ENCODE measurements at regions of chr11 and their contacts with region 1.

Region 1: DNA sequence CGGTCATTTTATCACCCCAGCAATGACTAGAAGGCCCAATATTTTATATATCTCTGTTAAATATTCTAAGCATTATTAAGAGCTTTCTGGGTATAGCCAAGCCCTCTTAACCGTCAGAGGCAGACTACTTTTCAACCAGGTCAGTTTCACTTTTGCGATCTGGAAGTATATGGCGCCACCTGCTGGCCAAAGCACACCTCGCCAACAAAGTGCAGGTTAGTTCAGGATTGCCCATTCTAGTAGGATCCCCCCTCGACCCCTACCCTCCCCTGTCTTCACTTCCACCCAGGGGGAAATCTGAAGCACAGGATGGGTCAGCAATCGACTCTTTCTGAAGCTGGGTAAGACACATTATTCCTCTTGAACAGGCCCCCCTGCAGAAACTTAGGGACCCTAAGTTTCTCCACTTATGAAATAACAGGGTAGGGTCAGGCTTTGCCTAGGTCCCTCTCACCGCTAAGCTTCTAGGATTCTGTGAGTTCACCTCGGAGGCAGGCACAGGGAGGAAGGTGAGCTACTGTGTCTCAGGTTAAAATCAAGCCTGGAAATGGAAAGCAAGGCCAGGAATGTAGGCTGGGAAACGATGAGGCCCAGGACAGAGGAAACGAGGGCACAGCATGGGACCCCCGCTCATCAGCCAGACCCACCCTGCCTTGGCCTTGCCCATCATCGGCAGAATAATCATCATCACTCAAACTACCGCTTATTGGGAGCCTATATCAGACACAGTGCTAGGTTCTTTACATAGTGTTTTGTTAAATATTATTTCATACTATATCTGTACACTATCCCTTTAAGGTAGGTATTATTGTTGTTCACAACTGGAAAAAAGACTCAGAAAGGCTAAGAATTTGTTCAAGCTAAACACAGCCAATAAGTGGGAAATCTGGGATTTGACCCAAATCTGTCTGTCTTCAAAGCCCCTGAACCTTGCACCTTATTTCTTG is 35.6 kb downstream of the KCNJ1 start:
- DNase-seq: peak; percentile 91
- ATAC-seq: peak; percentile 85
- H3K4me3 Mint-ChIP-seq: peak overlapping the region; percentile 58
- H3K27ac Mint-ChIP-seq: peak overlapping the region; percentile 66
- H3K4me1 Mint-ChIP-seq: peaks cover 30% of the 10 kb centered on the region
- H3K27me3 Mint-ChIP-seq: peaks cover 2% of the 10 kb centered on the region

Region 2: DNA sequence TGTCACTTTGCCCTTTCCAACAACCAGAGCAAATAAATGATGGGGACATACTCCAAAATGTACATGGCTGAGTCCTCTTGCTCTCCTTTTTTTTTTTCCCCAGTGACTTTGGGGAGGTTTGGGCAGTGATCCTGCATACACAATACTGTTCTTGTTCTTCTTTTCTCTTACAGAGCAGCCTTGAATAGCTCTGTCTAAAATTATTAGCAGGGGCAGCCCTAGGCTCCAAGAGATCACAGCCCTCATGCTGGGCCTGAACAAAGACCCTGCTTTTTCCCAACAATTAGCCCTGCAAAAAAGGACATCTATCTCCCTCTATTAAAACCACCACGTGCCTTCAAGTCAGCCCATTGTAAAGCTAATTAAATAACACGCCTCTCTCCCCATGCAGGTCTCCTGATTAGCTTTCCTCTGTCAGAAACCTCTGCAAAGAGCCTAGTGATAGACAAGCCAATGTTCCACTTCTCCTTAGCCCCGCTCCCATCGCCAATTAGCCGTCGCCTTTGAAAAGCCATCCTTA is 298.8 kb before region 1 on chr11:
- CTCF ChIA-PET with region 1: no interaction called
- POLR2A ChIA-PET with region 1: no interaction called
- DNase-seq: no peak
- ATAC-seq: no peak
- H3K4me3 Mint-ChIP-seq: no peak overlapping the region
- H3K27ac Mint-ChIP-seq: no peak overlapping the region
- H3K4me1 Mint-ChIP-seq: peaks cover 20% of the 10 kb centered on the region
- H3K27me3 Mint-ChIP-seq: peaks cover 2% of the 10 kb centered on the region

Region 3: DNA sequence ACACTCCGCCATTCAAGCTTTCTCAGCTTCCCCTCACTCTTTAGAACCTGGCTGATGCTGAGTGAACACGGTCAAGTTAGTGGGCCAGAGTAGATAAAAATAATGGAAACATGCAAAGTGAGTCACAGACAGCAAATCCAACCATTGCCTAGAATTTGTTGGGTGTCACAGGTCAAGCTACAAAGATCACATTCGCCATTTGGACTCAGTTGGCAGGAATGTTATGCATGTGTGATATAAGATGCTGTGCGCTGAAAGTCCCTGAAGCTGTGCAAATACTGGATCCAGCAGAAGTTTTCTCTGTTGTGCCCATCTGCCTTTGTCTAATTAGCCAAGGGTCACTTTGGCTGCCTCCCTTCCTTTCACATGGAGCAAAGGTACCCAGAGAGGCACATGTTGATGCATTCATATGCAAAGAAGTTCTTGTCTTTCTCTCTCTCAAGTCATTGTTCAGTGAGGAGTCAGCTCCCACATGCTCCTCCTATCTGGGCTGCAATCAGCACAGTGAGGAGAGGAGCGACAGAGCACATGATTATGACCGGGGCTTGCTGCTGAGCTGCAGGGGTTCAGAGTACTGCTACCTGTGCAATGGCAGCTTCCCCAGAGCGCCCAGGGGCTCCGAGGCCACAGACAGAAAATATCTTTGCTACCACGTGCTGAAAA is 97.9 kb before region 1 on chr11:
- CTCF ChIA-PET with region 1: interaction called, 10 read pairs
- POLR2A ChIA-PET with region 1: no interaction called
- DNase-seq: peak; percentile 51
- ATAC-seq: peak; percentile 53
- H3K4me3 Mint-ChIP-seq: peak overlapping the region; percentile 61
- H3K27ac Mint-ChIP-seq: peak overlapping the region; percentile 78
- H3K4me1 Mint-ChIP-seq: peaks cover 98% of the 10 kb centered on the region
- H3K27me3 Mint-ChIP-seq: no peaks in the 10 kb centered on the region

Region 4: DNA sequence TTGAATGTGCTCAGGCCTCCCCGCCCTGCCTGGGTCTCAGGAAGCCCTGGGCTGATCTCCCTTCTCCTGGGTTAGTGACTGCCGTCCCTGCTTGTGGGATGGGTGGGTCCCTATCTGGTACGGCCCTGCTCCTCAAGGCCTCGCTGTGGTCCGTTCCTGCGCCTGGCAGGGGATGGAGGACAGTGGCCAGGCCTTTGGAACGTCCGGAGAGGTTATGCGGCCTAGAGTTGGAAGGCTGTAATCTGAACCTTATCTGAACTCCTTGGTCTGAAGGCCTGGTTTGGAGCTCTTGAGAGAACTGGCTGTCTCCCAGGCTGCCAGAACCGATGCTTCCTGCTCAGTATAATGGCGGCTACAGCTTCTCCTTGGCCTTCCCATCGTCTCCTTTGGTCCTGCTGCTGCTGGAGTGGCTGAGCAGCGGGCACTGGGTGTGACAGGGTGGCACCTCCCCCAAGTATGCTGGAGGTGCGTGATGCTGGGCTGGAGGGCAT is 64.8 kb before region 1 on chr11:
- CTCF ChIA-PET with region 1: interaction called, 13 read pairs
- POLR2A ChIA-PET with region 1: no interaction called
- DNase-seq: no peak
- ATAC-seq: no peak
- H3K4me3 Mint-ChIP-seq: no peak overlapping the region
- H3K27ac Mint-ChIP-seq: no peak overlapping the region
- H3K4me1 Mint-ChIP-seq: peaks cover 22% of the 10 kb centered on the region
- H3K27me3 Mint-ChIP-seq: no peaks in the 10 kb centered on the region

Region 5: DNA sequence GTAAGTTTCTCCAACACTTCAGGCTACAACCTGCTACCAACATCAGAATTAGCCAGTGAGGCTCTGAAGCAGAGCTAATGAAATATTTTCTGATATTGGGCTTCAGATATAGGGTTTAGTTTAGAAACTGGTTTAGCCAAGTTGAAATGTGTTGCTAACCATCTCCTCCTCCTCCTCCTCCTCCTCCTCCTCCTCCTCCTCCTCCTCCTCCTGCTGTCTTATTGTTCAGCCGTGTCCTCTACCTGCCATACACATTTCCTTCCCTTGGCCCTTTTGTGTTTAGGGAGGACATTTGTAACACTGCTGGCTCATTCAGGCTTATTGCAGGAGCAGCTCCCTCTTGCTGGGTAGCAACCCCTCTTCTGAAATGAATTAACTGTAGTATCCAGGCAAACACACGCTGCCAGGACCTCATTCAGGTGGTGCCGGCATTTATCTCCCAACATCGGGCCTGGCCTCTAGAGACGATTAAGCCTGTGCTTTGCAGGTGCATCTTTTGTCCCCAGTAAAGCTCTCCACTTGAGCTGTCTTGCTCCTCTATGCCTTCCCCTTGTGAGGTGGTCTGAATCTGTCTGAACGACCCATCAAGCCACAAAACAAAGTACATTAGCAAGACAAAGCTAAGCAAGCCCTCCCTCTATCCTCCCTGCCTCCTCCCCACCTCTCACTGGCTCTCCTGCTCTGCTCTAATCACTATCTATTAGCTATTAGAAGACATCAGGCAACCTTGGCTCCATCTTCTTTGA is 47.2 kb before region 1 on chr11:
- CTCF ChIA-PET with region 1: interaction called, 14 read pairs
- POLR2A ChIA-PET with region 1: no interaction called
- DNase-seq: no peak
- ATAC-seq: no peak
- H3K4me3 Mint-ChIP-seq: no peak overlapping the region
- H3K27ac Mint-ChIP-seq: peak overlapping the region; percentile 39
- H3K4me1 Mint-ChIP-seq: peaks cover 38% of the 10 kb centered on the region
- H3K27me3 Mint-ChIP-seq: no peaks in the 10 kb centered on the region

Region 6: GRCh38 chr11:128841461-128842072 is 10.1 kb after region 1 on chr11:
- CTCF ChIA-PET with region 1: interaction called, 45 read pairs
- POLR2A ChIA-PET with region 1: interaction called, 5 read pairs
- DNase-seq: no peak
- ATAC-seq: peak; percentile 37
- H3K4me3 Mint-ChIP-seq: no peak overlapping the region
- H3K27ac Mint-ChIP-seq: no peak overlapping the region
- H3K4me1 Mint-ChIP-seq: peaks cover 51% of the 10 kb centered on the region
- H3K27me3 Mint-ChIP-seq: no peaks in the 10 kb centered on the region

Region 7: DNA sequence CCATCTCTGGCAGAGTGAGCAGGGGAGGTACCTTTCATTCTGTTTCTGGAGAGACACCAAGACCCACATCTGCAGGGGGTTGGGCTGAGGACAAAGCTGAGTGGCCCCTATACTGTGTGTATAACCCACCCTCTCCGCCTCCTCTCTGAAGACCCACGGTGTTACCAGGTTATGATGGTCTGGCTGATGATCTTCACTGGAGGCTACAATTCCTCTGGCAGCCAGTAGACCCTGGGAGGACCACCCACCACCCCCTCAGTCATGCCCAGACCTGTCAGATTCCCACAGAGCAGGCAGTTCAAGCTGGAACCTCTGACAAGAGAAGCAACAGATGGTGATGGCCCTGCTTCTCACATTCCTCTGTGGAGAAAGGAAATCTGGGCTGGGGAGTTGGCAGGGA is 47.0 kb after region 1 on chr11:
- CTCF ChIA-PET with region 1: no interaction called
- POLR2A ChIA-PET with region 1: no interaction called
- DNase-seq: no peak
- ATAC-seq: no peak
- H3K4me3 Mint-ChIP-seq: no peak overlapping the region
- H3K27ac Mint-ChIP-seq: no peak overlapping the region
- H3K4me1 Mint-ChIP-seq: no peaks in the 10 kb centered on the region
- H3K27me3 Mint-ChIP-seq: peaks cover 35% of the 10 kb centered on the region

Measured in activated CD8-positive, alpha-beta T cell treated with anti-CD3 and anti-CD28 coated beads, Interleukin-2, amount 10 ng/mL, durations not matched to agents 7 days and 5 days (primary cell).